Aorta (tissue), 5 donors: ENCODE measurements at regions of chr4 and their contacts with region 1.

Region 1: GRCh38 chr4:38319456-38320342 is 344.3 kb upstream of the KLF3 start:
- DNase-seq: peak; percentile 96 to 99
- ATAC-seq: peak; percentile 97
- H3K4me3 ChIP-seq: no peak overlapping the region
- H3K27ac ChIP-seq: peak overlapping the region in 1 of 2 donors; percentile 68
- H3K4me1 ChIP-seq: no peaks in the 10 kb centered on the region
- H3K27me3 ChIP-seq: no peaks in the 10 kb centered on the region

Region 2: GRCh38 chr4:38062088-38062893 is 257.4 kb before region 1 on chr4:
- intact Hi-C with region 1: loop called in 1 of 2 experiments (anchors 5 kb)
- DNase-seq: peak; percentile 83 to 86
- ATAC-seq: peak; percentile 86
- H3K4me3 ChIP-seq: peak overlapping the region; percentile 29 to 55
- H3K27ac ChIP-seq: peak overlapping the region; percentile 7 to 82
- H3K4me1 ChIP-seq: no peaks in the 10 kb centered on the region
- H3K27me3 ChIP-seq: no peaks in the 10 kb centered on the region

Region 3: GRCh38 chr4:38190717-38191178 is 129.0 kb before region 1 on chr4:
- intact Hi-C with region 1: loop called in 1 of 2 experiments (anchors 5 kb)
- DNase-seq: peak; percentile 84 to 88
- ATAC-seq: peak; percentile 88
- H3K4me3 ChIP-seq: no peak overlapping the region
- H3K27ac ChIP-seq: peak overlapping the region; percentile 81 to 85
- H3K4me1 ChIP-seq: peaks cover 0 to 2% of the 10 kb centered on the region in 2 donors
- H3K27me3 ChIP-seq: no peaks in the 10 kb centered on the region

Region 4: GRCh38 chr4:38366456-38366855 is 46.8 kb after region 1 on chr4:
- intact Hi-C with region 1: loop called in 1 of 2 experiments (anchors 5 kb)
- DNase-seq: peak in 1 of 2 donors; percentile 78
- ATAC-seq: peak; percentile 83
- H3K4me3 ChIP-seq: no peak overlapping the region
- H3K27ac ChIP-seq: peak overlapping the region in 1 of 2 donors; percentile 75
- H3K4me1 ChIP-seq: peaks cover 5 to 13% of the 10 kb centered on the region in 2 donors
- H3K27me3 ChIP-seq: no peaks in the 10 kb centered on the region

Region 5: GRCh38 chr4:38387348-38387747 is 67.6 kb after region 1 on chr4:
- intact Hi-C with region 1: no loop called
- DNase-seq: peak in 1 of 2 donors; percentile 87
- ATAC-seq: peak; percentile 85
- H3K4me3 ChIP-seq: no peak overlapping the region
- H3K27ac ChIP-seq: peak overlapping the region; percentile 57 to 71
- H3K4me1 ChIP-seq: peaks cover 8 to 13% of the 10 kb centered on the region in 2 donors
- H3K27me3 ChIP-seq: no peaks in the 10 kb centered on the region

Region 6: DNA sequence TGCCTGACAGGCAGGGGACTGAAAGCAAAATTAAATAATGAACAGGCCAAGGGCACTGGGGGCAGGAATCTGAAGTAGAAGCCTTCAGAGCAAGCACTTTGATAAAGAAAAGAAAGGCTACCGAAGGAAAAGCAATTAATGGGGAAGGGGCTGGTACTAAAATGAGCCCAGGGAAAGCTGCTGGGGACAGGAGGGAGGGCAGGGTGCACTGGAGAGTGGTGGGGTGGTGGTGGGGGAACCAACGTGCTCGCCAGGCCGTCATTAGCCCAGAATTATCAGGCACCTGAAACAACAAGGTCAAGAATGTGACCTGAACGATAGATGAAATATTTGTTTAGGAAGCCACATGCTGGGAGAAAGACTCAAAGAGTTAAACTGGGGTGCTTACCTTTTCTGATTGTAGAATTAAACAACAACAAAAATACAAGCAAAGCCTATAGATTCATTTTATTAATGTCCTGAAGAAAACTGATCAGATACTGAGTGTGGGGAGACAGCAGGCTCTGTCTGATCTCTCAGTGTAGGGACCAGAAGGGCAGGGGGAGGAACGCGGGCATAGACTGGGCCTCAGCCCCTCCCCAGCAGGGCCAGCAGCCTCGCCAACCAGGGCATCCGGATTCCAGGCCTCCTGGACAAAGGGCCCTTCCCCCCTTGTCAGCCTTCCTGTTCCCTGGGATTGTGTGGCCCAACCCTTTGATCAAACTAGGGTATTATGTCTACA is 104.6 kb after region 1 on chr4:
- intact Hi-C with region 1: no loop called
- DNase-seq: no peak
- ATAC-seq: no peak
- H3K4me3 ChIP-seq: no peak overlapping the region
- H3K27ac ChIP-seq: no peak overlapping the region
- H3K4me1 ChIP-seq: no peaks in the 10 kb centered on the region
- H3K27me3 ChIP-seq: peaks cover 0 to 4% of the 10 kb centered on the region in 2 donors

Region 7: GRCh38 chr4:38675146-38676121 is 355.7 kb after region 1 on chr4:
- intact Hi-C with region 1: loop called (anchors 1 to 5 kb)
- DNase-seq: peak; percentile 80 to 83
- ATAC-seq: peak; percentile 71
- H3K4me3 ChIP-seq: no peak overlapping the region
- H3K27ac ChIP-seq: no peak overlapping the region
- H3K4me1 ChIP-seq: peaks cover 3 to 5% of the 10 kb centered on the region in 2 donors
- H3K27me3 ChIP-seq: no peaks in the 10 kb centered on the region